ENCODE measurements at regions of chr3 and their contacts with region 1.

Region 1: GRCh38 chr3:8769088-8769822 is at the start of gene OXTR:
- DNase-seq: peak; percentile 78
- H3K4me3 ChIP-seq: peak within 1 kb of the TSS; percentile 78
- CTCF ChIP-seq: peak; percentile 100

Region 2: GRCh38 chr3:8755563-8756237 is 13.6 kb before region 1 on chr3:
- CTCF ChIA-PET with region 1: interaction called, 33 read pairs
- POLR2A ChIA-PET with region 1: interaction called, 4 read pairs
- DNase-seq: no peak
- H3K4me3 ChIP-seq: no peak overlapping the region
- CTCF ChIP-seq: peak; percentile 24

Region 3: DNA sequence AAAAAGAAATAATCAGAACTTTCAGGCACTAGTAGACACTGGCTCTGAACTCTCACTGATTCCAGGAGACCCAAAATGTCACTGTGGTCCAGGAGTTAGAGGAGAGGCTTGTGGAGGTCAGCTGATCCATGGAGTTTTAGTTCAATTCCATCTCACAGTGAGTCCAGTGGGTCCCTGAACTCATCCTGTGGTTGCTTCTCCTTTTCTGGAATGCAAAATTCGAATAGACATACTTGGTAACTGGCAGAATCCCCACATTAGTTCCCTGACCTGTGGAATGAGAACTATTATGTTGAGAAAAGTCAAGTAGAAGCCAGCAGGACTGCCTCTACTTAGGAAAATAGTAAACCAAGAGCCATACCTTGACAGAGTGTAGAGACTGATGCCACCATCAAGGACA is 87.5 kb after region 1 on chr3:
- CTCF ChIA-PET with region 1: interaction called, 25 read pairs
- POLR2A ChIA-PET with region 1: interaction called, 18 read pairs
- DNase-seq: no peak
- H3K4me3 ChIP-seq: no peak overlapping the region
- CTCF ChIP-seq: no peak

Region 4: DNA sequence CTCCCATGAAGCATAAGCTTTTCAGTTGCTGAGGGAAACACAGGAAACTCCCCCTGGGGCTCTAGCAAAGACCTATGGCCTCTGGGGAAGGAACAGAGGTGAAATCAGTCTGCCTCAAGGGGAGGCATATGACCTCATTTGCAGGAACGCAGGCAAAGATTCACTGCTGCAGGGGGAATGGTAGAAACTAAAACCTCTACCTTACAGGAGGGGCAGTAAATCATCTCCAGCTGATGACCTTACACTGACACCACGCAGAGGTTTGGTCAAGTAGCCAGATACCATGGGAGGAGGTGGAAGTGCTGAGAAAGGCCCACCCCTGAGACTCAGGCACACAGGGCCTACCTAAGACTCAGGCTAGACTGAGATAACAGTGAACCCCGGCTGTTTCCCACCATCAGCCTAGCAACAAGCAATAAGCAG is 112.9 kb after region 1 on chr3:
- CTCF ChIA-PET with region 1: interaction called, 77 read pairs
- POLR2A ChIA-PET with region 1: interaction called, 8 read pairs
- DNase-seq: no peak
- H3K4me3 ChIP-seq: no peak overlapping the region
- CTCF ChIP-seq: no peak

Region 5: DNA sequence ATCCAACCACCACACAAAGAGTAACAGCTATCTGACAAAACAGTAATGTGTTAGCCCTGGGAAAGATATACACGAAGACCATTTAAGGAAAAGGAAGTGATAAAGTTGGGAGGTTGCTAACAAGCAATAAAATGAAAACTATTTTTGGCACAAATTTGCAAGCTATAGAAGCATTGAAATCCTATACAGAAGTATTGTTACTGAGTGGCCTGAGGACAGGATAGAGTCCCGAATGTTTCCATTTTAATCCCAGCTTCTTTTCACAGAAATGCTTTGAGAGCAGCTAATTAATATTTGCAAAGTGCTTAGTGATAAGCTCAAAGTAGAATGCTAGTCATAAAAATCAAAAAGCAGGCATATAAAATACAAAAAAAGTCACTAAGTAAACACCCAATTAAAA is 142.5 kb after region 1 on chr3:
- CTCF ChIA-PET with region 1: interaction called, 20 read pairs
- POLR2A ChIA-PET with region 1: no interaction called
- DNase-seq: no peak
- H3K4me3 ChIP-seq: no peak overlapping the region
- CTCF ChIP-seq: no peak

Region 6: DNA sequence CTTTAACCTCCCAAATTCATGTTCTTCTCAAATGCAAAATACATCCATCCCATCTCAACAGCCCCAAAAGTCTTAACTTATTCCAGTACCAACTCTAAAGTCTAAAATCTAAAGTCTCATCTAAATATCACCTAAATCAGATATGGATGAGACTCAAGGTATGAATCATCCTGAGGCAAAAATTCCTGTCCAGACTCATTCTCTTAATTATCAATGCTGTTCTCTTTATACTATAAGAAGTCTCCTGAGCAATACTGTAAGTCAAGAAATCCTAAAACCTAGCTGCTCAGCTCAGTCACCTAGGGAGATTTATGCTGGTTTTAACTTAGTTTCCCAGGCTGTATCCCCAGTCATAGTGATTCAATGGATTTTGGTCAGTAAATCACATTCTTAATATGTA is 182.9 kb after region 1 on chr3:
- CTCF ChIA-PET with region 1: interaction called, 38 read pairs
- POLR2A ChIA-PET with region 1: no interaction called
- DNase-seq: no peak
- H3K4me3 ChIP-seq: no peak overlapping the region
- CTCF ChIP-seq: no peak

Region 7: DNA sequence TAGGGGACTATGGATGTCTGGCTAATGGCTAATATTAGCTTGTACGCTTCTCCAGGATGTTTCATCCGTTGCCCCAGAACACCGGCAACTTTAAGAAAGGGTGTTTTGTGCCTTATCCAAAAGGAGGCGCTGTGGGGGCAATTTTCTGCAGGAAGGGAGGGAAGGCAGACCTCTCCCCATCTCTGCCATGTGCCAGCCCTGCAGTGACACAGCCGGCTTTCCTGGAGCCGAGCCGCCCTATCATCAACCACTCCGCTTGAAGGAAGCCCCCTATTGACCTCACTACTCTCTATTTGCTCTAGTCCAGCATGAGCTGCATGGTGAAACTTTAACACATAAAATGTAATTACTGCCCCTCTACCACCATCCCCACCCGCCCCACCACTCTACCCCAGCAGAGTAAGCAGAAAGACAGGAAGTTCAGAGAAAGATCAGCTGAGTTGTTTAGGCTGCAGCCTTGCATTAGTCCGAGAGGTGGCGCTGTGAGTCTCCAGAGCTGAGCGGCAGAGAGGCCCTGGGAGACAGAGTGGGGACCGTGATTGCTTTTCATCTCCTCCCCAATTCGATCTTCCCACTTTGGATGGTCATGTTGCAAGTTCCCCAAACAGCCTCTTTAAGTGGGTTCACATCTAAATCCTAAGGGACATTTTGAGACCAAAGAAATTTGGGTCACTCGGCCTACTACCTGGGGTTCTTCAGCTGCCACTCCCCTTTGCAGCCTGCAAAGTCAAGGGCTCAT is 218.6 kb after region 1 on chr3:
- CTCF ChIA-PET with region 1: interaction called, 12 read pairs
- POLR2A ChIA-PET with region 1: no interaction called
- DNase-seq: no peak
- H3K4me3 ChIP-seq: no peak overlapping the region
- CTCF ChIP-seq: peak; percentile 87